Activated T-helper 2 cell treated with anti-CD3 and anti-CD28 coated beads, Interferon-gamma antibody, Interleukin-2, Interleukin-4, amounts not matched to agents 10 μg/mL and 5 μg/mL and 100 μg/mL, durations not matched to agents 14 hours and 24 hours and 36 hours (primary cell): ENCODE measurements at regions of chr9 and their contacts with region 1.

Region 1: DNA sequence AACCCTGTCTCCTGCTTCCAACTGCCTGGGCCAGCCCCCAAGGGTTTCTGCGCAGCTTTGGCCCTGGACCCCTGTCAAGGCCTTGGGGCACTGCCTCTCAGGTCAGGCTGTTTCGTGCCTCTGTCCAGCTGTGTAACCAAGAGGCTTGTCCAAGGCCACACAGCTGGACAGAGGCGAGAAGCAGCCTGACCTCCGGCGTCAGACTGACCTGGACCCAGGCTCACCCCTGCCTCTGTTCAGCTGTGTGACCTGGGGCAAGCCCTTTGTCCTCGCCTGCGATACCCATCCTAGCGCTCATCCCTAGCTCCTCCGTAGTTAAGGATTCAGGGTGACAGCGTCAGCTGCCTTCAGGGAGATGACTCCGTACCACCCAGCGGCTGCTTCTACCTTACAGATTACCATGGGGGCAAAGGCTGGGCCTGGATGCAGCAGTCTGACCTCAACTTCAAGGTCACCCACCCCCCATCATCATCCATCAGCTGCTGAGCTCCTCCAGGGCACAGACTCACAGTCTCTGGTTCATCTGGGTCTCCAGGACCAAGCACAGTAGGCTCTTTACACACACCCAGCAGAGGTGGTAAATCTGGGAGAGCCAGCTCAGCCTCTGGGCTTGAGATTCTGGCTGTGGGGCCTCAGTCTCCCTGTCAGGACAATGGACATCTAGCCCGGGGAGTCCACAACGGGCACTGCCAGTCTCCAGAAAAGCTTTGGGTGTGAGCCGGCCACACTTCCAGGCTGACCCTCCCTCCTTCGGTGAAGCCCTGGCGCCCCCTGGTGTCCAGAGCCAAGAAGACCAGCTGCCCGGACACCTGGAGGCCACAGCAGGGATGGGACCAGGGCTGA is 7.9 kb downstream of the AK1 start:
- DNase-seq: peak; percentile 69
- H3K4me3 Mint-ChIP-seq: no peak overlapping the region
- H3K27ac Mint-ChIP-seq: no peak overlapping the region
- H3K4me1 Mint-ChIP-seq: peaks cover 12% of the 10 kb centered on the region
- H3K27me3 Mint-ChIP-seq: no peaks in the 10 kb centered on the region

Region 2: GRCh38 chr9:127785023-127785932 is 84.3 kb before region 1 on chr9:
- intact Hi-C with region 1: loop called (anchors 2 kb)
- DNase-seq: peak; percentile 88
- H3K4me3 Mint-ChIP-seq: peak overlapping the region; percentile 97
- H3K27ac Mint-ChIP-seq: peak overlapping the region; percentile 86
- H3K4me1 Mint-ChIP-seq: peaks cover 56% of the 10 kb centered on the region
- H3K27me3 Mint-ChIP-seq: no peaks in the 10 kb centered on the region

Region 3: GRCh38 chr9:127825319-127826051 is 44.0 kb before region 1 on chr9:
- intact Hi-C with region 1: no loop called
- DNase-seq: no peak
- H3K4me3 Mint-ChIP-seq: no peak overlapping the region
- H3K27ac Mint-ChIP-seq: no peak overlapping the region
- H3K4me1 Mint-ChIP-seq: no peaks in the 10 kb centered on the region
- H3K27me3 Mint-ChIP-seq: no peaks in the 10 kb centered on the region